K562 (cell line): ENCODE measurements at regions of chr2 and their contacts with region 1.

Region 1: DNA sequence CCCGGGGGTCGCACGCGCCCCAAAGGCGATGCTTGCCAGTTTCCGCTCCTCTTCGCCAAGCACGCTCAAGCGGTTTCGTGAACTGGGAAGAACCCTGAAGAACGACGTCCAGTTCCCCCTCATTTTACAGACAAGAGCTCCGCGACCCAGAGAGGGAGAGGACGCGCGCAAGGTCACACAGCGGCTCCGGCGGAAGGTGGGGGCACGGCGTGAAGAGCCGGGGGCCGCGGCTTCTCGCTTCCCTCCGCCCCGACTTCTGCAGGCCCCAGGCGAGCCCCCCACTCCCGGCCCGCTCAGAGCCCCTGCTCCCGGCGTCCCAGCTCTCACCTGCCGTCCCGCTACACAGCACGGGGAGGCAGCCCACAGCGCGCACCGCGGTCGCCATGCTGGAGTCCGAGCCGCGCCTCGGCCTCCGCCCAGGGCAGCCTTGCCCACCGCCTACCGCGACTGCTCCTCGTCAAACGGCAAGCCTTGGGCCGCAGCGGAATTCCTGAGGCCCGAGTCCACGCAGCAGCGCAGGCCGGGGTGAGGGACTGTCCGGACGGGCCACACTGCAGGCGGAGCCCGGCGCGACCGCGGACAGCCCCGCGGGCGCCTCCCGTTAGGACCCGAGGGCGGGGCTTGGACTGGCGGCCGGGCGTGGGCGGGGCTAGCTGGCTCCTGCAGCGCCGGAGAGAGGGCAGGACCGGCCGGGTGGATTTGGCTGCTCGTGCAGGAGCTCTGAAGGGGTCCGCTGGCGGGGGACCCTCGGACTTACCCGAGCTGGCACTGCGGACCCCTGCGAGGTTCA is at the start of gene MRPS5:
- DNase-seq: peak; percentile 89 to 96 (median 95)
- ATAC-seq: peak; percentile 96
- H3K4me3 ChIP-seq: peak within 1 kb of the TSS; percentile 98
- H3K27ac ChIP-seq: peak within 1 kb of the TSS; percentile 98
- H3K4me1 ChIP-seq: peaks cover 10 to 14% of the 10 kb centered on the region in 2 experiments; a peak in 4 of 5 replicates
- H3K27me3 ChIP-seq: no peaks in the 10 kb centered on the region
- CTCF ChIP-seq: peak in 2 of 3 experiments; percentile 17 to 33; a peak in 3 of 6 replicates
- EP300 ChIP-seq: no peak; the same call in 1 of the 2 replicates
- POLR2A ChIP-seq: peak; percentile 85
- RAD21 ChIP-seq: peak in 1 of 2 experiments; percentile 14; a peak in 1 of 4 replicates
- polyA plus RNA-seq, gene MRPS5: 85.0 to 118 TPM

Region 2: GRCh38 chr2:95138702-95139101 is 17.1 kb after region 1 on chr2:
- CTCF ChIA-PET with region 1: no interaction called
- POLR2A ChIA-PET with region 1: no interaction called
- in situ Hi-C with region 1: no loop called
- intact Hi-C with region 1: no loop called
- DNase-seq: no peak
- ATAC-seq: no peak
- H3K4me3 ChIP-seq: no peak overlapping the region
- H3K27ac ChIP-seq: no peak overlapping the region
- H3K4me1 ChIP-seq: no peaks in the 10 kb centered on the region
- H3K27me3 ChIP-seq: no peaks in the 10 kb centered on the region
- CTCF ChIP-seq: no peak
- EP300 ChIP-seq: no peak
- POLR2A ChIP-seq: no peak
- RAD21 ChIP-seq: no peak

Region 3: DNA sequence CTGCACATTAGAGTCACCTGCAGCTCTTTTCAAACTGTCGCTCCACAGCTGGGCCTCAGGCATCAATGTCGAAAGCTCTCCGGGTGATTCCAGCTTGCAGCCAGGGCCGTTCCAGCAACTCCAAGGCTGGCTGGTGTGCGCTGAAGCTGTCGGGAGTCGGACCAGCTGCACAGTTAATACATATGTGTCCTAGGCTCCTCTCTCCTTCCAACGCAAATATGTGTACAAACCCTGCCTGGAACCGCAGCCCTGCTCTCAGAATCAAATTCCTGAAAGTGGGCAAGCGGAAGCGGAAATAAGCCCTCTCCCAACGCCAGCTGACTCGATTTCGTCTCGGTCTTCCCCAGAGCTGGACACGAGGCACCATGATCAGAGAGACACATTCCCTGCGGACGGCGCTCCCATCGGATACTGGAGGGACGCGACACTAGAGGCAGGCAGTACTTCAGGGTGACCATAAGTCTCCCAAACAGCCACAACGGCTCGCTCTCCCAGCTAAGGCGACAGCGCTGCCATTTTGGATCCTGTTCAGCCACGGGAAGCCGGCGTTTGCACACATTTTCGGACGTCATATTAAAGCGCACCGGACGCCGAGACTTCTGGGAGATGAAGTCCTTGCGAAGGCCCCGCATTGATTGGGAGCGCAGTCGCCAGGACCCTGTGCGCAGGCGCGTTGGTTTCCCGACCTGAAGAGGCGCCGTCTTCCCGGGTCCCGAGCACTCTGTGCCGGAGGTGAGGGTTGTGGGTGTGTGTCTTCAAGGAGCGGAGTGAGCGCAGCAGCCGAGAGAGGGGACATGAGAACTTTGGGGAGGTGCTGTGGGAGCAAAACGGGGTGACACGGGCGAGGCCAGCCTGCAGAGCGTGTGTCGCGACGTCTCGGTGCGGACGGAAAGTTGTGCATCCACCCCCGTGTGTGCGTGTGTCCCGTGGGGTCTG is 43.8 kb after region 1 on chr2 and contains the start of gene ZNF2:
- CTCF ChIA-PET with region 1: no interaction called
- POLR2A ChIA-PET with region 1: no interaction called
- in situ Hi-C with region 1: no loop called
- intact Hi-C with region 1: loop called (anchors 5 kb)
- DNase-seq: peak; percentile 96 to 98 (median 96)
- ATAC-seq: peak; percentile 98
- H3K4me3 ChIP-seq: peak within 1 kb of the TSS; percentile 73
- H3K27ac ChIP-seq: peak within 1 kb of the TSS; percentile 92
- H3K4me1 ChIP-seq: peaks cover 3 to 5% of the 10 kb centered on the region in 2 experiments; a peak in 3 of 5 replicates
- H3K27me3 ChIP-seq: no peaks in the 10 kb centered on the region
- CTCF ChIP-seq: peak in 1 of 3 experiments; percentile 11; a peak in 1 of 6 replicates
- EP300 ChIP-seq: peak; percentile 49; the same call in 1 of the 2 replicates
- POLR2A ChIP-seq: peak; percentile 97
- RAD21 ChIP-seq: no peak
- polyA plus RNA-seq, gene ZNF2: 3.3 to 4.2 TPM